Mammary epithelial cell (primary cell): ENCODE measurements at regions of chrX and their contacts with region 1.

Region 1: GRCh38 chrX:95764972-95765451 is 919.6 kb upstream of the DIAPH2 start:
- DNase-seq: peak; percentile 11
- H3K4me3 ChIP-seq: no peak overlapping the region
- H3K27ac ChIP-seq: no peak overlapping the region
- H3K4me1 ChIP-seq: no peaks in the 10 kb centered on the region
- H3K27me3 ChIP-seq: peaks cover 2% of the 10 kb centered on the region
- CTCF ChIP-seq: peak; percentile 54 to 64

Region 2: GRCh38 chrX:95505721-95506120 is 259.3 kb before region 1 on chrX:
- CTCF ChIA-PET with region 1: no interaction called
- dilution Hi-C with region 1: no loop called
- in situ Hi-C with region 1: no loop called
- intact Hi-C with region 1: loop called (anchors 5 kb)
- DNase-seq: peak; percentile 0
- H3K4me3 ChIP-seq: no peak overlapping the region
- H3K27ac ChIP-seq: no peak overlapping the region
- H3K4me1 ChIP-seq: no peaks in the 10 kb centered on the region
- H3K27me3 ChIP-seq: no peaks in the 10 kb centered on the region
- CTCF ChIP-seq: peak in 1 of 2 donors; percentile 55

Region 3: GRCh38 chrX:96182366-96182765 is 417.4 kb after region 1 on chrX:
- CTCF ChIA-PET with region 1: interaction called, 3 read pairs
- dilution Hi-C with region 1: no loop called
- in situ Hi-C with region 1: loop called in 1 of 2 experiments (anchors 25 kb)
- intact Hi-C with region 1: loop called (anchors 1 kb)
- DNase-seq: peak; percentile 8
- H3K4me3 ChIP-seq: no peak overlapping the region
- H3K27ac ChIP-seq: no peak overlapping the region
- H3K4me1 ChIP-seq: peaks cover 11% of the 10 kb centered on the region
- H3K27me3 ChIP-seq: no peaks in the 10 kb centered on the region
- CTCF ChIP-seq: peak; percentile 63 to 71